Prostate gland (tissue), 2 donors: ENCODE measurements at regions of chr7 and their contacts with region 1.

Region 1: DNA sequence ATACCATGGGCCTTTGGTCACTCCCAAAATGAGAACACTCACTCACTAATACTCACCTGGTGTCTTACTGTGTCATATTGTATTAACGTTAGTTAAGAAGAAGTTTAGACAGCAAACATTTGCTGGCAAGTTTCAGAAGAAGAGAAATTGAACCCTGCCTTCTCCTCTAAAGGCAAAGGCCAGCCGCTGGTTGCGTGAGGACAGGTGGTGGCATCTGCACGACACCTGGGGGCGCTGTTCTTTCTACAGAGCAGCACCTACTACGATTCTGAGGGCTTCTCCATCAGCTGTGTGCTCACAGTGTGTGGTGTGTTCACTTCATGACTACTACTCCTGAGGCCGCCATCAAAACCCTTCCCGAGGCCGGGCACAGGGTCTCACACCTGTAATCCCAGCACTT is 17.9 kb upstream of the CLEC2L start:
- DNase-seq: no peak
- H3K4me3 ChIP-seq: no peak overlapping the region
- H3K27ac ChIP-seq: no peak overlapping the region
- H3K4me1 ChIP-seq: no peaks in the 10 kb centered on the region
- H3K27me3 ChIP-seq: no peaks in the 10 kb centered on the region
- CTCF ChIP-seq: no peak
- POLR2A ChIP-seq: no peak

Region 2: GRCh38 chr7:139620676-139621344 is 115.2 kb after region 1 on chr7:
- intact Hi-C with region 1: loop called (anchors 10 kb)
- DNase-seq: no peak
- H3K4me3 ChIP-seq: no peak overlapping the region
- H3K27ac ChIP-seq: no peak overlapping the region
- H3K4me1 ChIP-seq: no peaks in the 10 kb centered on the region
- H3K27me3 ChIP-seq: no peaks in the 10 kb centered on the region
- CTCF ChIP-seq: peak in 3 of 4 experiments; percentile 32 to 56 (median 47)
- POLR2A ChIP-seq: no peak

Region 3: DNA sequence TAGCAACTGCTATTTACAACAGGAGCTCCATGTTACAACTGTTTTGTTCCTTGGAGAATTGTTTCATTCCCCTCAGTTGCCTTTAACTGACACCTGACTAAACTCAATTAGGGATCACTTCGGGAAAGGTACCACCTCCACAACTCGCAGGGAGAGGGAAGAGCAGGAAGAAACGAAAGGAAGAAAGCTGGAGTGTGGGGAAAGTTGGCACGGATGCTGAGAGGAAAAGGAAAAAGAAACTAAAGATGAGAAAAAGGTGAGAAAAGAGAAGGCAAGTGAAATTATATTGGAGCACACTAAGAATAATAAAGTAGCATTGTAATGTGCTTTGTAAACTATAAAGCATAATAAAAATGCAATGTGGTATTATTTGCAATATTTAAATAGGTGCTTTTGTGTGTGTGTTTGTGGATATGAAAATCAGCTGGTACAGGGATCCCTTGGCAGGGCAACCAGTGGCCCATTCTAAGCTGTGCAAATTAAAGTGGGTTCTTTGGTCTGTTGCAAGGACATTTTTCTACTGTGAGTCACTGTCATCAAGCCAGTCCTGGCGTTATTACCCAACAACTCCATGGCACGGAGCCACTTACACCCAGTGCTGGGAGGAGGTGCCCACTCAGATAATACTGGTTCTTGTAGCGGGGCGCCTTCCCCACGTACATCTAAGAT is 226.4 kb after region 1 on chr7:
- intact Hi-C with region 1: no loop called
- DNase-seq: peak; percentile 89
- H3K4me3 ChIP-seq: no peak overlapping the region
- H3K27ac ChIP-seq: peak overlapping the region; percentile 63 to 69
- H3K4me1 ChIP-seq: peaks cover 21% of the 10 kb centered on the region
- H3K27me3 ChIP-seq: no peaks in the 10 kb centered on the region
- CTCF ChIP-seq: no peak
- POLR2A ChIP-seq: no peak